ENCODE measurements at regions of chr6 and their contacts with region 1.

Region 1: GRCh38 chr6:46781478-46782378 is 11.5 kb upstream of the MEP1A start:
- DNase-seq: peak; percentile 67
- ATAC-seq: peak; percentile 83
- H3K4me3 ChIP-seq: no peak overlapping the region
- H3K27ac ChIP-seq: no peak overlapping the region
- H3K4me1 ChIP-seq: no peaks in the 10 kb centered on the region
- H3K27me3 ChIP-seq: no peaks in the 10 kb centered on the region
- CTCF ChIP-seq: peak; percentile 76
- EP300 ChIP-seq: no peak
- POLR2A ChIP-seq: no peak
- RAD21 ChIP-seq: peak; percentile 50

Region 2: GRCh38 chr6:46080111-46080510 is 701.6 kb before region 1 on chr6:
- CTCF ChIA-PET with region 1: no interaction called
- POLR2A ChIA-PET with region 1: no interaction called
- in situ Hi-C with region 1: no loop called
- intact Hi-C with region 1: no loop called
- DNase-seq: no peak
- ATAC-seq: no peak
- H3K4me3 ChIP-seq: no peak overlapping the region
- H3K27ac ChIP-seq: no peak overlapping the region
- H3K4me1 ChIP-seq: no peaks in the 10 kb centered on the region
- H3K27me3 ChIP-seq: no peaks in the 10 kb centered on the region
- CTCF ChIP-seq: no peak
- EP300 ChIP-seq: no peak
- POLR2A ChIP-seq: no peak
- RAD21 ChIP-seq: no peak

Region 3: DNA sequence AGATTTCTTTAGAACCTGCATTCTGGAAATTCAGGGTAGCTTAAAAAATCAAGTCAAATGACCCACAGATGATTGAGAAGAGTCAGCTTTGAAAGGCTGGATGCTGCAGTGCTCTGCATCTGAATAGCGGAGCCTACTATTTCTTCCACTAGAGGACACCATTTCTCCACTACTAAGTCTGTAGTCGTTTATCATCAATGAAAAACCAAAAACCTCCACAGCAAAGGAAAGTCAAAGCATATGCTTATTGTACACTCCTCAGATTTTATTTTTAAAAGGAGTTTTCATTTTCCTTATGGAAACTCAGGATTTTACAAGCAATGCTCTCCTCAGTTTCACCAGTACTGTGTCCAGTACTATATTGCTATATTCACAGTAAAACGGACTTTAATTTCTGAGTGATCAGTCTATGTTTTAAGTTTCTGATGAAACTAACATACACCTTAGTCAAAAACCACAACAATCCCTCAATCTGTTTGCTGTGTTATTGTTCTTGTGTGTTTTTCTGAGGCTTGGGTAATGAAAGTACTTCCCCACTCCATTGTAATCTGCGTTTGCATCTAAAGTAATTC is 560.4 kb before region 1 on chr6:
- CTCF ChIA-PET with region 1: interaction called, 4 read pairs
- POLR2A ChIA-PET with region 1: no interaction called
- in situ Hi-C with region 1: no loop called
- intact Hi-C with region 1: loop called (anchors 2 kb)
- DNase-seq: peak; percentile 26
- ATAC-seq: peak; percentile 88
- H3K4me3 ChIP-seq: no peak overlapping the region
- H3K27ac ChIP-seq: no peak overlapping the region
- H3K4me1 ChIP-seq: no peaks in the 10 kb centered on the region
- H3K27me3 ChIP-seq: no peaks in the 10 kb centered on the region
- CTCF ChIP-seq: peak; percentile 76
- EP300 ChIP-seq: no peak
- POLR2A ChIP-seq: no peak
- RAD21 ChIP-seq: peak; percentile 74

Region 4: GRCh38 chr6:46684771-46685170 is 97.0 kb before region 1 on chr6:
- CTCF ChIA-PET with region 1: no interaction called
- POLR2A ChIA-PET with region 1: no interaction called
- in situ Hi-C with region 1: no loop called
- intact Hi-C with region 1: loop called (anchors 10 kb)
- DNase-seq: no peak
- ATAC-seq: no peak
- H3K4me3 ChIP-seq: no peak overlapping the region
- H3K27ac ChIP-seq: no peak overlapping the region
- H3K4me1 ChIP-seq: no peaks in the 10 kb centered on the region
- H3K27me3 ChIP-seq: no peaks in the 10 kb centered on the region
- CTCF ChIP-seq: no peak
- EP300 ChIP-seq: no peak
- POLR2A ChIP-seq: no peak
- RAD21 ChIP-seq: no peak

Region 5: DNA sequence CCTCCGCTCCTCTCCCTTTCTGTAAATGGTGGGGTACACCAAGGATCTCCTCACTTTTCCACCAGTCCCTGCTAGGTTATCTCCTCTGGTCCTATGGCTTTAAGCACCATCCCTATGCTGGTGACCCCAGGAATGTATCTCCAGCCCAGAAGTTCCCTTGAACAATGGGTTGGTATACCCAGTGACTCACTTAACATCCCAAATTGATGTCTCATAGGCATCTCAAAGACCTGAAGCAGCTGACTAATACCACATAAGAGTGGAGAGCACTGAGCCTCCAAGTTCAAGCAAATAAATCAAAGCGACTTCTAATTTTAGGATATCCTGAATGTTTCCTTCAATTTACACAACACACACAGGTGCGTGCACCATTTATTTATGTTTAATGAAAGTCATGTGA is 212.1 kb after region 1 on chr6:
- CTCF ChIA-PET with region 1: no interaction called
- POLR2A ChIA-PET with region 1: no interaction called
- in situ Hi-C with region 1: no loop called
- intact Hi-C with region 1: loop called (anchors 5 kb)
- DNase-seq: peak; percentile 28
- ATAC-seq: no peak
- H3K4me3 ChIP-seq: no peak overlapping the region
- H3K27ac ChIP-seq: no peak overlapping the region
- H3K4me1 ChIP-seq: peaks cover 8% of the 10 kb centered on the region; the same call in 1 of the 2 replicates
- H3K27me3 ChIP-seq: peaks cover 0 to 26% of the 10 kb centered on the region in 2 experiments; a peak in 2 of 5 replicates
- CTCF ChIP-seq: no peak
- EP300 ChIP-seq: no peak
- POLR2A ChIP-seq: no peak
- RAD21 ChIP-seq: no peak

Measured in HepG2 (cell line).